ENCODE measurements at regions of chr19 and their contacts with region 1.

Region 1: DNA sequence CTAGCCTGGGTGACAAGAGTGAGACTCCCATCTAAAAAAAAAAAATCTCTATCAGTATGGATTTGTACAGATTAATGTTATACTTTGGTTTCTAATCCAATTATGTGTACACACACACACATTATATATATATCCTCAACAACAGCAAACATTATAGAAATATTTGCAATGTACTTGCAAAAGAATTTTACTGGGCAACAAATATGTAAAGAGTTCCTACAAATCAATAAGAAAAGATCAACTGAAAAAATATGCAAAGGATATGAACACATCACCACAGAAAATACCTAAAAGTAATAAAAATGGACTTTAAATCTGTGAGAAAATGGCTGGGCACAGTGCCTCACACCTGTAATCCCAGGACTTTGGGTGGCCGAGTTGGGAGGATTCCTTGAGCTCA is 40.9 kb upstream of the NFIC start:
- DNase-seq: no peak
- H3K4me3 ChIP-seq: no peak overlapping the region
- H3K27ac ChIP-seq: no peak overlapping the region
- H3K4me1 ChIP-seq: no peaks in the 10 kb centered on the region
- H3K27me3 ChIP-seq: no peaks in the 10 kb centered on the region

Region 2: DNA sequence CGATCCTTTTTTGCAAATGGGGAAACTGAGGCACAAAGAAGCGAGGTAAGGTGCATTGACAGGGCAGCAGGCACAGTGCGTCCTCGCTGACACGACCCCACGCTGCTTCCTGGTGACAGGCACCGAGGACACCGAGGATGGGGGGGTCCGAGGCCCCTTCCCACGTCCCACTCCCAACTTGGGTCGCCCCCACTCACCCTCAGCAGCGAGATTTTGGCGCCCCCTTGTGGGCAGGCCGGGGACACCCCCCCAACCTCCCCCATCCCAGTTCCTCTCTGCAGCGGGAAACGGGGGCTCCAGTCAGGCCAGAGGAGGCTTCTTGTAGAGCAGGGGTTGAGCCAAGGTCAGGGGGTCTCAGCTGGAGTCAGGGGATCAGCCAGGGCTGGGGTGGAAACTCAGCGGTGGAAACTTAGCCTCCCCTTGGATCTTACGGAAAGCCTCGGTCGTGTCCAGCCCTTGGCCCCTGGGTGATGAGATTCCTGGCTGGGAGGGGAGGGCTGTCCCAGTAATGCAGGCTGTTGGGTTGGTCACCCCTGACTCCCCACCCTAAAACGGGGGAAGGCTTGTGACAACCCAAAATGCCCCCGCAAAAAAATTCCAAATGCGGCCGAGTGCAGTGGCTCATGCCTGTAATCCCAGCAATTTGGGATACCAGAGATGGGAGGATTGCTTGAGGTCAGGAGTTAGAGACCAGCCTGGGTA is 146.7 kb after region 1 on chr19:
- in situ Hi-C with region 1: loop called (anchors 5 kb)
- DNase-seq: no peak
- H3K4me3 ChIP-seq: no peak overlapping the region
- H3K27ac ChIP-seq: no peak overlapping the region
- H3K4me1 ChIP-seq: no peaks in the 10 kb centered on the region
- H3K27me3 ChIP-seq: no peaks in the 10 kb centered on the region

Measured in GM23248 (cell line).